ENCODE measurements at regions of chr7 and their contacts with region 1.

Region 1: DNA sequence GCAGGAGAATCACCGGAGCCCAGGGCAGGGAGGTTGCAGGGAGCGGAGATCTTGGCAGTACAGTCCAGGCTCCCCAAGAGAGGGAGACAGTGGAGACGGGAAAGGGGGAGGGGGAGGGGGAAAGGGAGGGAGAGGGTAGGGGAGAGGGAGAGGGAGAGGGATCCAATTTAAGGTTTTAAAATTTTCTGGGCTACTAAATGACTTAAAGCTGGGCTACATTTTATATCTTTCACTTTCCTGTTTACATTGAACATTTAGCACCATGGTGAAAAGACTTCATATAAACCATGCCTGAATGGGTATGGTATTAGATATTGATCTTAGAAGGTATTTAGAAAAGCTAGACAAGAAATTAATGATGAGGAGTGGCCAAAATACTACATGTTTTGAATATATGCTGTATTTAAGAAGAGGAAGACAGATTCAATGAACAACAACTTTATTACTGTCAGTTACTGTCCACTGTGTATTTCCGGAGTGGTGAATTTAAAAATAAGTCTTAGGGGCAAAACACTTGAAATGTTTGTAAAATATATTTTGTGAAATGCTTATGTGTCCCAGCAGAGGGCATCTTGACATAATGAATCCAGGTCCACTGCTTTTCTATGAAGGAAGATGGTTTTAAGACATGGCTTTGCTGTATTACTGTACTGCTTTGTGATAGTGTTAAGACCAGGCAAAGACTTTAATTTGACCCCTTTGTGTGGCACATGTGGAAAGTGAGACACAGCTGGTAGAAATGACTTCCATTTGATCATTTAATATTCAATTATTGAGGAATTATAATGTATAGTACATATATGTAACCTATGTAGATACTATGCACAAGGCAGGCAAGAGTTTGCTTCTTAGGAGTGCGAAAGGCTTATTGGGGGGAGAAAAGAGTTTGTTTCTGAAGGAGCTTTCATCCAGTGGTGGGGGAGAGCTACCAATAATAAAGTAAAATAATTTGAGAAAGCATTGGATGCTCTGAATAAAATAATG is 52.8 kb downstream of the NRF1 start:
- DNase-seq: no peak

Region 2: DNA sequence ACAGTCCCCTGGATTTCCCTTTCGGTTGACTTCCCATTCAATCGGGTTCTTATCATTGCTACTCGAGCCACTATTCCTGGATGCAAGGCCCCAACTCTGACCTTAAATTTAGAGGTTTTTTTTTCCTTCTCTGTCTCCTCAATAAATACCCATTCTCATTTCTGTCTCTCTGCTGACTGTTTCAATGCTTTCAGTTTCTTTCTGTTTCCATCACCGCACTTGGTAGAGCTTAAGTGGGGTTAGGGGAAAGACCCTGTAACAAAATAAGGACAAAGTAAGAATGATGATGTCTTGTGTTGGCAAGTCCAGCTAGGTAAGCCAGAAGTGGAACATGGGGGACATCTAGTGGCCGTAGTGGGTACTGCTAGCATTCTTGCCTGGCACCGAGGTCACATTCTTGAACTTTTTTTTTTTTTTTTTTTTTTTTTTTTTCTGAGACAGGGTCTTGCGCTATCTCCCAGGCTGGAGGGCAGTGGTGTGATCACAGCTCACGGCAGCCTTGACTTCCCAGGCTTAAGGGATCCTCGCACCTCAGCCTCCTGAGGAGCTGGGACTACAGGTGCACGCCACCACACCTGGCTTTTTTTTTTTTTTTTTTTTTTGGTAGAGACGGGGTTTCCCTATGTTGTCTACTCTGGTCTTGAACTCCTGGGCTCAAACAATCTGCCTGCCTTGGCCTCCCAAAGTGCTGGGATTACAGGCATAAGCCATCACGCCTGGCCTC is 346.5 kb after region 1 on chr7:
- intact Hi-C with region 1: loop called (anchors 10 kb)
- DNase-seq: peak; percentile 91